AG04450 (cell line): ENCODE measurements at regions of chr1 and their contacts with region 1.

Region 1: GRCh38 chr1:154974063-154974807 is at the start of gene CKS1B:
- DNase-seq: peak; percentile 100
- H3K4me3 ChIP-seq: peak within 1 kb of the TSS; percentile 77
- H3K27ac ChIP-seq: peak within 1 kb of the TSS; percentile 100
- H3K27me3 ChIP-seq: no peaks in the 10 kb centered on the region
- CTCF ChIP-seq: no peak
- polyA plus RNA-seq, gene CKS1B: 66.4 and 81.3 TPM in 2 replicates

Region 2: DNA sequence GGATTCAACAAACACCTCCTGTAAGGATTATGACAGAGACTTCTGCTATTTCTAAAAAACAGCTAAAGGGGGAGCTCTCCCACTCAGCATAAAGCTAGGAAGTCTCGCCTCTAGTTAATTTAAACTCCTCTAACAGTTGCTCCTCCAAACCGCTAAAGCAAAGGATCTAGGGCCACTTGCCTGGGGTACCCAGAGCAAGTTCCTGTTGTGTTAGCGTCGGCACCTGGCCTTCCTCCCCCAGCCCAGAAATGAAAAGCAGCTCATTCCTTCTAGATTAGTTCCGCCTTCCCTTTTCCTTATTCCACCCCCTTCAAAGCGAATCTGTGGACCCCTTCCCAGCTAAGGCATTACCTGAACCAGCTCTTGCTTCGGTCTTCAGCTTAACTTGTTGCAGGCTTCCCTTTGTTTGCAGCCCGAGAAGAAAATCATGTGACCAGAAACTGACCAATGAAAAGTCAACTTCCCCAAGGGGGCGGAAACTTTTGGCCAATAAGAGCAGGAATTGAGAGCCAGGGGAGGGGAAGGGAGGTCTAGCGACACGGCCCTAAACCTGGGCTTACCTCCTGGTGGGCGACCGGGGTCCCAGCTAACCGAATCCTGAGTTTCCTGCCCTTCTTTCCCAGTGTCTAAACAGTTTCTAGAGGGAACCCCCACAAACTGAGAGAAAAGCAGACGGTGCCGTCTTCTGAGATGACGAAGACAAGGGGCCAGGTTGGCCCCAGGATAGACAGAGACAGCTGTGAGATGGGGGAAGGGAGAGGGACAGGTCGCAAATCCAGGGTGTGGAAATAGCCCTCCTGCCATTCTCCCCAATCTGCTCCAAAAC is 18.3 kb before region 1 on chr1 and contains the start of gene PBXIP1:
- CTCF ChIA-PET with region 1: interaction called, 10 read pairs
- POLR2A ChIA-PET with region 1: interaction called, 59 read pairs
- DNase-seq: no peak
- H3K4me3 ChIP-seq: peak within 1 kb of the TSS; percentile 84
- H3K27ac ChIP-seq: peak within 1 kb of the TSS; percentile 88
- H3K27me3 ChIP-seq: no peaks in the 10 kb centered on the region
- CTCF ChIP-seq: peak; percentile 52
- polyA plus RNA-seq, gene PBXIP1: 72.2 and 87.1 TPM in 2 replicates

Region 3: DNA sequence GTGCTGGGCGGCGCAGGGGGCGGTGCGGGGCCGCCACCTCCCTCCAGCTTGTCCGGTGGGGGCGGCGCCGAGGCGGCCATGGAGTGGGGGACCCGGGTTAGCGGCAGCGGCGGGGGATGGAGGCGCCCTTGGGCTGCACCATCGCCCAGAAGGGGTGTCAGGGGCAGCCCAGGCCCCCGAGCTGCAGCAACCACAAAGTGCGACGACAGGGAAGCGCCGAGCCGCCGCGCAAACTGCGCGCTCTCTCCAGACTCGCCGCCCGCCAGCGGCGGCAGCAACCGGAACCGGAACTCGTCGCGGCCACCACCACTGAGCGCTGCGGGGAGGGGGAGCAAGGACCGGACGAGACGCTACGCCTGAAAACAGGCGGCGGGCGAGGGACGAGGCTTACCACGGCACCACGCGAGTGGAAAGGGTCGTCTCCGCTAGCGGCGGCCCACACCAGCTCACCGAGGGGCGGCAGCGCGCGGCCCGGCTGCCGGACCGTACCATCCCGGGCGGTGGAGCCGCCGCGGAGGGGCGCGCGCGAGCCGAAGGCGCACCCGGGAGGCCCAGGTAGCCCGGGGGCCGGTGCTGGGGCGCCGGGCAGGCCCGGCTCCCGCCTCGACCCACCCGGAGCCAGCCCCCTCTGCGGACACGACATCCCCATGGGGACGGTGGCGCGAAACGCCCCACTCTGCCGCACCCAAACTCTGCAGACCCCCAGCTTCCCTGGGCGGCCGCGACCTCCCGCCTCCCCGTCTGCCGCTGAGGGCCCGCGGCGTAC is 12.6 kb before region 1 on chr1 and contains the start of gene PYGO2:
- CTCF ChIA-PET with region 1: interaction called, 10 read pairs
- POLR2A ChIA-PET with region 1: interaction called, 59 read pairs
- DNase-seq: no peak
- H3K4me3 ChIP-seq: peak within 1 kb of the TSS; percentile 74
- H3K27ac ChIP-seq: peak within 1 kb of the TSS; percentile 81
- H3K27me3 ChIP-seq: no peaks in the 10 kb centered on the region
- CTCF ChIP-seq: peak; percentile 16
- polyA plus RNA-seq, gene PYGO2: 18.1 and 19.3 TPM in 2 replicates

Region 4: DNA sequence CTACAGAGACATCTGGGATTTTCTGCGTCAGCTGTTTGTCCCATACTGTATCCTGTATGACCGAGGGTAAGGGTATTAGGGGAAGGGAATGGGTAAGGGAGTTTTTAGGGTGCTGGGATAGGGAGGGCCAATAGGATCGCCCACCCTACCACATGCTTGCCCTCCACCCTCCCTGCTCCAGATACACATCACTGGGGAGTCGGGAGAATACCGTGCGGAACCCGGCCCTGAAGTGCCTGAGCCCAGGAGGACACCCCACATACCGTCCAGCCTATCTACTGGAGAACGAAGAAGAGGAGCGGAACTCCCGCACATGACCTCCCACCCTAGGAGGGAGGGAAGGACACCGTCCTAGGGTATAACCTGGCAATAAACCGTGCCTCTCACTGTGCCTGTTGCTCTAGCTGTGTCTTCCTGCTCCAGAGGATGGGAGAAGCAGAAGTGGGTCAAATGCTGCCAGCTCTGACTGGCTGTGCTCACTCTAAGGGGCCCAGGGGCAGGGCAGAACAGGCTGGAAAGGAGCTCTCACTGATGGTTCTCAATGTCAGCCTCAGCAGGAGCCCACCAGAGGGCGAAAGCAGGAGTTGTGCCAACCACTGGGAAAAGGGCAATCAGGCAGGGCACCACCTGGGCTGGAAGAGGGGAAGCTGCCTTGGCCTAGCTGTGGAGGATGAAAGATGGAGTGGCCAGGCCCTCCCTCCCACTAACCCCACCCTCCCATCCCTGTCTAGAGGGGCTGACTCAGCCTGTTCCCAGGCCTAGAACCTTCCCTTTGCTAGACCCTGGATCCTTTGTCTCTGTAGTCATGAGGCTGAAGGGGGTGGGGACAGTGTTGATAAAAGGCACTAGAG is 18.7 kb after region 1 on chr1:
- CTCF ChIA-PET with region 1: interaction called, 8 read pairs
- POLR2A ChIA-PET with region 1: interaction called, 15 read pairs
- DNase-seq: no peak
- H3K4me3 ChIP-seq: no peak overlapping the region
- H3K27ac ChIP-seq: peak overlapping the region; percentile 21
- H3K27me3 ChIP-seq: no peaks in the 10 kb centered on the region
- CTCF ChIP-seq: peak; percentile 20; the same call in 1 of the 2 replicates

Region 5: DNA sequence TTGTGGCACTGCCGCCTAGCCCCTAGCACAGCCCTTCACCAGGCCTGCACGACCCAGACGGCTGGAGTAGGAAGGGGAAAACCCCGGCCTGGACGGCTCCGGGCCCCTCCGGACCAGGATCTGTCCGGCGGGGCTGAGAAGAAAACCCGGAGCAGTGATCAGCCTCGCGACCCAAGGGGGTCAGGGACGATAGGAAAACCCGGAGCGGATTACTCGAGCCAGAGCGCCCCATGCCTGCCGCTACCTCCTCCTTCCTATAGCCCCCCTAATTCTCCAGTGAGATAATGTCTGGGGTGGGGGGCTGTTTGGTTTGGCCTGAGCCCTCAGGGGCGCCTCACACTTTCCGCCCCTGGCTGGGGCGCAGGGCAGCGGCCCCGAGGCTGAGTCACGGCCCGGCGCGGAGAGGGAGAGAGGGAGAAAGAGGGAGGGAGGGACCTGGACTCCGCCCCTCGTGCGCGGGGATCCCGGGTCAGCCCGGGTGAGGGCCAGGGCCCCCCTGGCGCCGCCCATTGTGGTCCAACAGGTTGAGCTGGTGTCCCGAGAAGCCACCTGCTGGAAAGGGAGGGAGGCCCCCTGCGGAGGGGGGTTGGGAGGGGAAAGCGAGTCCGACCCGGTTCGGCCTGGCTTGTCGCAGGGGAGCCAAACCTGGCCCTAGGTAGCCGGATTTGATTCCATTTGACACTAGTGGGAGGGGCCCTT is 26.6 kb after region 1 on chr1:
- CTCF ChIA-PET with region 1: interaction called, 8 read pairs
- POLR2A ChIA-PET with region 1: interaction called, 15 read pairs
- DNase-seq: peak; percentile 52
- H3K4me3 ChIP-seq: peak overlapping the region; percentile 76
- H3K27ac ChIP-seq: peak overlapping the region; percentile 84
- H3K27me3 ChIP-seq: no peaks in the 10 kb centered on the region
- CTCF ChIP-seq: no peak; the same call in none of the 2 replicates